WTC11 (cell line): ENCODE measurements at regions of chr2 and their contacts with region 1.

Region 1: DNA sequence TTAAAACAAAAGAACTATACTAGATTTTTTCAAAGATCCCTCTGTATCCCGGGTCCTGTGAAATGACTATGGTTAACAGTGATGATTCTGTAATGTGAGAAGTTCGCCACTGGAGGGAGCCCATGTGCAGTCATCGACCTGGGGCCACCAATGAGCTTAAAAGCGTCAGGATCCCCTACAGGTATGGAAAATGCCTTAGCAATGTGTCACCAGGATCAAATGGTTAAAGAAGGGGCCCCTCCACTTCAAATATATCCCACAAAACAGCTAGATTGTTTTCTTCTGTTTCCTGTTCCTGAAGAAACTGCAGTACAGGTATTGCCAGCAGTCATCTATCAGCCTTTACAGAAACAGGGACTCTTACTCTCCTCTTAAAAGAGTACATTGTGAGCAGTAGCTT is 15.3 kb downstream of the CHRNA1 start:
- DNase-seq: peak; percentile 85
- ATAC-seq: peak; percentile 94
- H3K4me3 Mint-ChIP-seq: no peak overlapping the region
- H3K27ac Mint-ChIP-seq: peak overlapping the region; percentile 4; the same call in 1 of the 2 replicates
- H3K4me1 Mint-ChIP-seq: peaks cover 33% of the 10 kb centered on the region
- H3K27me3 Mint-ChIP-seq: no peaks in the 10 kb centered on the region
- CTCF ChIP-seq: peak; percentile 69

Region 2: DNA sequence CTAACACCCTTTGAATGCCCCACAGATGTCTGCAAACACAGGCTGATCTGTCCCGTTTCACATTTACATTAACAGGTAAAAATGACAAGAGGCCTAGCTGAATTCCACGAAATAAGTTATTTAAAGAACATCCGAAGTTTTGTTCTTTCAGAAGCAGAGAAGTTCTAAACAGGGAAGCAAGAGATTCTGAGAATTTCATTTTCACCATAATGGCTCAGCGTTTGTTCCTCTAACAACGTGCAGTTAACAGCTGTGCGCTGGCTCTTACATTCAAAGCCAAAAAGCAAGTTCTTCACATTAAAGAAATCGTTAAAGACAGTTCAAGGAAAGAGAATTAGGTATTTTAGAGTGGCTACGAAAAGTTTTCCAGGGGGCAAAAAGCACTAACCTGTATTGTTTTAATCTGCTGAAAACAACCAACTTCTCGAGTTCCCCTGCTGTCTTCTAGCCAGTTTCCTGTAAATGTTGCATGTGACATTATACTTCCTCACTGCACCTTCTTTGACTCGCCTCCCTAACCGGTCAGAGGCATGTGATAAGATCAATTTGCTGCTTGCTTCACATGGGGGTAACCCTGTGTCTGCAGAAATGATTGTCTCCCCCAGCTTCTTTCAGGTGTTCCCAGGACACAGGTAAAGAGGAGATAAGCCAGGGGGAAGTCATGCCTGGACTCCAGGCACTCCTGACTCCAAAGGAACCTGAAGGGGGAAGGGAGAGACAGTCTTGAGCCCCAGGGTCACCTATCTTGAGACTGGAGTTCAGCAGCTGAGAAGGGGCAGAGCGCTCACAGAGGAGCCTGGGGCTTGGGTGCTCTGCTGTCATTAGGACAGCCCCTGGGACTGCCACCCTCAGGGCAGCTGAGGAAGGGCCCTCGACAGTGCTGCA is 114.6 kb before region 1 on chr2:
- CTCF ChIA-PET with region 1: no interaction called
- POLR2A ChIA-PET with region 1: no interaction called
- DNase-seq: no peak
- ATAC-seq: peak; percentile 52
- H3K4me3 Mint-ChIP-seq: no peak overlapping the region
- H3K27ac Mint-ChIP-seq: no peak overlapping the region
- H3K4me1 Mint-ChIP-seq: peaks cover 11% of the 10 kb centered on the region
- H3K27me3 Mint-ChIP-seq: no peaks in the 10 kb centered on the region
- CTCF ChIP-seq: no peak

Region 3: GRCh38 chr2:174764280-174765255 is 15.6 kb after region 1 on chr2 and contains the start of gene CHRNA1:
- CTCF ChIA-PET with region 1: interaction called, 44 read pairs
- POLR2A ChIA-PET with region 1: no interaction called
- DNase-seq: no peak
- ATAC-seq: 0 out of 2 replicates have a peak, but pooled peaks have one; percentile 31
- H3K4me3 Mint-ChIP-seq: no peak within 1 kb of the TSS
- H3K27ac Mint-ChIP-seq: no peak within 1 kb of the TSS
- H3K4me1 Mint-ChIP-seq: peaks cover 27% of the 10 kb centered on the region
- H3K27me3 Mint-ChIP-seq: no peaks in the 10 kb centered on the region
- CTCF ChIP-seq: no peak
- total RNA-seq, gene CHRNA1: not detected in 3 replicates

Region 4: GRCh38 chr2:174778085-174778981 is 29.4 kb after region 1 on chr2:
- CTCF ChIA-PET with region 1: interaction called, 25 read pairs
- POLR2A ChIA-PET with region 1: interaction called, 4 read pairs
- DNase-seq: no peak
- ATAC-seq: no peak
- H3K4me3 Mint-ChIP-seq: no peak overlapping the region
- H3K27ac Mint-ChIP-seq: no peak overlapping the region
- H3K4me1 Mint-ChIP-seq: peaks cover 83% of the 10 kb centered on the region
- H3K27me3 Mint-ChIP-seq: no peaks in the 10 kb centered on the region; the same call in none of the 2 replicates
- CTCF ChIP-seq: no peak

Region 5: DNA sequence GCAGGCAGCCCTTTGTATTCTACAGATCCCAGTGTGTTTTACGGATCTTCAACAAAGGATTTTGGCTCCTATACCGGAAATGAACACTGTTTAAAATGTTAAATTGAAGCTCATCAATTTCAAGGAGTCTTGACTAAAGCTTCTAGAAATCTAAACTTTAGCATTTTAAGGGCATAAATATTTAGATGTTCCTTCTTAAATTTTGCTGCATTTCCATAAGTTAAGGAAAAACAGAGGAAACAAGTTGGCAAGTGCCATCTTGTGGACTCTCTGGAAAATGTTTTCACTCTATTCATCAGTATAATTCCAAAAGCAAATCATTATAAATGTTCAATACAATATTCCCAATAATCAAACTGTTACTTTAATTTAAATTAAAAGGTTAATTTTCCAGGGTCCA is 236.7 kb after region 1 on chr2:
- CTCF ChIA-PET with region 1: interaction called, 46 read pairs
- POLR2A ChIA-PET with region 1: no interaction called
- DNase-seq: no peak
- ATAC-seq: no peak
- H3K4me3 Mint-ChIP-seq: no peak overlapping the region
- H3K27ac Mint-ChIP-seq: no peak overlapping the region
- H3K4me1 Mint-ChIP-seq: peaks cover 33% of the 10 kb centered on the region
- H3K27me3 Mint-ChIP-seq: no peaks in the 10 kb centered on the region
- CTCF ChIP-seq: no peak

Region 6: GRCh38 chr2:175030380-175031271 is 281.7 kb after region 1 on chr2:
- CTCF ChIA-PET with region 1: interaction called, 27 read pairs
- POLR2A ChIA-PET with region 1: no interaction called
- DNase-seq: peak; percentile 61
- ATAC-seq: peak; percentile 99
- H3K4me3 Mint-ChIP-seq: no peak overlapping the region
- H3K27ac Mint-ChIP-seq: no peak overlapping the region
- H3K4me1 Mint-ChIP-seq: peaks cover 13% of the 10 kb centered on the region
- H3K27me3 Mint-ChIP-seq: no peaks in the 10 kb centered on the region
- CTCF ChIP-seq: 0 out of 2 replicates have a peak, but pooled peaks have one; percentile 18

Region 7: GRCh38 chr2:175065906-175066305 is 317.0 kb after region 1 on chr2:
- CTCF ChIA-PET with region 1: no interaction called
- POLR2A ChIA-PET with region 1: no interaction called
- DNase-seq: no peak
- ATAC-seq: no peak
- H3K4me3 Mint-ChIP-seq: no peak overlapping the region
- H3K27ac Mint-ChIP-seq: no peak overlapping the region
- H3K4me1 Mint-ChIP-seq: no peaks in the 10 kb centered on the region
- H3K27me3 Mint-ChIP-seq: no peaks in the 10 kb centered on the region; the same call in 1 of the 2 replicates
- CTCF ChIP-seq: no peak